T-cell (primary cell): ENCODE measurements at regions of chr18 and their contacts with region 1.

Region 1: GRCh38 chr18:44227501-44227900 is 453.2 kb upstream of the SETBP1 start:
- DNase-seq: no peak
- ATAC-seq: no peak
- H3K4me3 ChIP-seq: no peak overlapping the region
- H3K4me3 Mint-ChIP-seq: no peak overlapping the region
- H3K27ac ChIP-seq: no peak overlapping the region
- H3K27ac Mint-ChIP-seq: no peak overlapping the region
- H3K4me1 ChIP-seq: no peaks in the 10 kb centered on the region
- H3K4me1 Mint-ChIP-seq: no peaks in the 10 kb centered on the region
- H3K27me3 ChIP-seq: no peaks in the 10 kb centered on the region
- H3K27me3 Mint-ChIP-seq: no peaks in the 10 kb centered on the region

Region 2: GRCh38 chr18:44258576-44258975 is 31.1 kb after region 1 on chr18:
- CTCF ChIA-PET with region 1: no interaction called
- POLR2A ChIA-PET with region 1: interaction called in 1 of 2 experiments, 21 read pairs
- DNase-seq: no peak
- ATAC-seq: no peak
- H3K4me3 ChIP-seq: no peak overlapping the region
- H3K4me3 Mint-ChIP-seq: no peak overlapping the region
- H3K27ac ChIP-seq: no peak overlapping the region
- H3K27ac Mint-ChIP-seq: no peak overlapping the region
- H3K4me1 ChIP-seq: no peaks in the 10 kb centered on the region
- H3K4me1 Mint-ChIP-seq: no peaks in the 10 kb centered on the region
- H3K27me3 ChIP-seq: no peaks in the 10 kb centered on the region
- H3K27me3 Mint-ChIP-seq: no peaks in the 10 kb centered on the region

Region 3: GRCh38 chr18:44341759-44342158 is 114.3 kb after region 1 on chr18:
- CTCF ChIA-PET with region 1: no interaction called
- POLR2A ChIA-PET with region 1: no interaction called
- DNase-seq: no peak
- ATAC-seq: no peak
- H3K4me3 ChIP-seq: no peak overlapping the region
- H3K4me3 Mint-ChIP-seq: no peak overlapping the region
- H3K27ac ChIP-seq: no peak overlapping the region
- H3K27ac Mint-ChIP-seq: no peak overlapping the region
- H3K4me1 ChIP-seq: no peaks in the 10 kb centered on the region
- H3K4me1 Mint-ChIP-seq: no peaks in the 10 kb centered on the region
- H3K27me3 ChIP-seq: no peaks in the 10 kb centered on the region
- H3K27me3 Mint-ChIP-seq: no peaks in the 10 kb centered on the region